ENCODE measurements at regions of chr9 and their contacts with region 1.

Region 1: DNA sequence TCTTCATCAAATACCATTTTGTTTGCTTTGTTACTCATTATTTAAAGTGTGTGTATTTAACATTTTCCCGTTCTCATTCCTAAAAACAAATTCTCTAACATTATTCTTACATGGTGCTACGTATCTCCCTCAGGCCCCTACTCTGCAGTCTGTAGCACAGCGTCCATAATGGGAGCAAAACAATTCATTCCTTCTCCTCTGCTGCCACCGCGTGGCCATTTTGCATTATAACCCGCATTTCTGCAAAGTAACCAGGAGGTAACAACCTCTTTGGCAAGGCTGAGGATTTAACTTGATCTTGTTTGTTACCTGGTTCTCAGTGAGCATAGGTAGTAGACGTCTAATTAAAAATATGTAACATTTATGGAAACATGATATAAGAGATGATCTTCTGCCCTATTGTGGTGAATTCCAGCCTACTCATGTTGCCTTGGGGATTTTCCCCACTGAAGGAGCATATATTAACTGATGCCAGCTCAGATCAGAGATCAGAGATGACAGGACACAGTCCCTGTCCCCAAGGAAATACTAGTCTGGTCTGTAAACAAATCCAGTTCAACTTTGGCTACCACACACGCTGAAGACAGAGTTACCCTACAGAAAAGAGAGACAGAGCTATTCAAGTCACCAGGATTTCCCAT is 10.5 kb downstream of the OR1K1 start:
- DNase-seq: peak in 1 of 2 donors; percentile 72
- H3K4me3 ChIP-seq: no peak overlapping the region
- H3K27ac ChIP-seq: no peak overlapping the region
- H3K4me1 ChIP-seq: no peaks in the 10 kb centered on the region
- H3K27me3 ChIP-seq: no peaks in the 10 kb centered on the region
- CTCF ChIP-seq: peak; percentile 63 to 80 (median 79)

Region 2: GRCh38 chr9:122464633-122465567 is 345.5 kb before region 1 on chr9:
- intact Hi-C with region 1: loop called (anchors 1 kb)
- DNase-seq: peak; percentile 16 to 88
- H3K4me3 ChIP-seq: peak overlapping the region; percentile 44 to 57
- H3K27ac ChIP-seq: no peak overlapping the region
- H3K4me1 ChIP-seq: no peaks in the 10 kb centered on the region
- H3K27me3 ChIP-seq: no peaks in the 10 kb centered on the region
- CTCF ChIP-seq: peak; percentile 55 to 75 (median 55)